Left colon (tissue), 2 donors: ENCODE measurements at regions of chr2 and their contacts with region 1.

Region 1: GRCh38 chr2:118046634-118047210 is 32.9 kb upstream of the CCDC93 start:
- DNase-seq: no peak
- ATAC-seq: peak; percentile 44

Region 2: GRCh38 chr2:117875786-117876185 is 170.9 kb before region 1 on chr2:
- intact Hi-C with region 1: no loop called
- DNase-seq: no peak
- ATAC-seq: no peak

Region 3: GRCh38 chr2:117980783-117981676 is 65.7 kb before region 1 on chr2:
- intact Hi-C with region 1: no loop called
- DNase-seq: no peak
- ATAC-seq: no peak

Region 4: DNA sequence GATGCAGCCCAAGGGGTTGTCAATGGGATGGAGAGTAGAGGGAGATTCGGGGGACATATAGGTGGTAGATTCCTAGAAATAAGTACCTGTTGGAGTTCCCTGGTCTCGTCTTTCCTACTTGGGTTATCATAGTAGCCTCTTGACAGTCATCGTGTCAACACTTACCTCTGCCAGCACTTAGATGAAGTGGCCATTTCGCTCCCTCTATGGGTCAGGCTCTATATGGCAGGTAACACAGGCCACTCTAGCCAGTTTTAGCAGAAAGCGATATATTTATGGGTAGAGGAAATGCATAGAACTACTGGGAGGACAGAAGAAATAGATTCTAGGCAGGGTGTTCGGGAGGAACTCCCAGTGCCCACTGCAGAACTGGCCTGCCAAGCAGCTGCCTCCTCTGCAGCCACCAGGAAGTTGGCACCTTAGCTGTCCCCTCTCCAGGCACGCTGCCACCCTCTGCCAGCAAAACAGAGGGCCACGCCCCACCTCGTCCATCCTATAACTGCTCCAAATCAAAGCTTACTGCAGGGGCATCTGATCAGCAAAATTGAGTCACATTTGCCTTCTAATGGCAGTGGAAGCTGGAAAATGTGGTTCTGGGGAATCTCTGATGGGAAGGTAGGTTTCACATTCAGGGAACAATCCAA is 222.8 kb after region 1 on chr2:
- intact Hi-C with region 1: no loop called
- DNase-seq: no peak
- ATAC-seq: no peak

Region 5: DNA sequence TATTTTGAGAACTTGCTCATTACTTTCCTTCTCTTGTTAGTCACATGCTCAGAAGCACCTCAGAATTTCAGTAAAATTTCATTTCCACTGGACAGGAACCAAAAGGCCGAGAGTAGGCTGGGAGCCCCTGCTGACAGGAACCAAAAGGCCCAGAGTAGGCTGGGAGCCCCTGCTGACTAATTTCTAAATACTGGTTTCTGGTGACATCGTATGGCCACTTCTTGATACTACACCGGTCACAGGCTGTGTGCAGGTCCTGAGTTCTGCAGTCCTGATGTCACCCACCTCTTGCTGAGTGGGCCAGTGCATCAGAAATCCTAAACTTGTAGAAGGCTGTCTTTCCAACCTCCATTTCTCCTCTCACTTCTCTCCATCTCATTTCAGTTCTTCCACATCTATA is 818.4 kb after region 1 on chr2:
- intact Hi-C with region 1: loop called in 1 of 2 experiments (anchors 5 kb)
- DNase-seq: no peak
- ATAC-seq: peak; percentile 76